Uterus (tissue), 4 donors: ENCODE measurements at regions of chr3 and their contacts with region 1.

Region 1: DNA sequence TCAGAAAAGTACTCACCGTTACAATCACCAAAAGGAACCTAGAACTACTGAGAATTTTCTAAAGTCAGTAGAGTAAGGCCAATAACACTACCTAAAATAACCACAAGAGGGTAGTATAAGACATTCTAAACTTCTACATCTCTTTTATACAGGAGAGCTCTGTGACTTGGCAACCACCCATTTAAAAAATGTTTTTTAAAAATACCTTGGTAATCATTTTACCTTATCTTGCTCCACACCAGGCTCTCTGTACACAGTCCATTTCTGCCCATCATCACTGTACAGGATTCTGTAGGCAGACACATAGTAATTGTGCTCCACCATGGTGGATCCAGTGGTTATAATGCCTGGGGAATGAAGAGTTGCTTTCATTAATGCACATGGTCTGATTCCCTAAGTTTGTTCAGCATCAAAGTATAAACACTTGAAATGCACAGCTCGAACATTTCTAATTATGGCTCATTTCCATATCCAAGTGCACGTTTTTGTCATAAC is 54.5 kb downstream of the ST3GAL6 start:
- DNase-seq: no peak
- H3K4me3 ChIP-seq: no peak overlapping the region
- H3K27ac ChIP-seq: no peak overlapping the region
- H3K4me1 ChIP-seq: no peaks in the 10 kb centered on the region
- H3K27me3 ChIP-seq: no peaks in the 10 kb centered on the region
- CTCF ChIP-seq: peak; percentile 61 to 79 (median 74)
- POLR2A ChIP-seq: no peak

Region 2: GRCh38 chr3:98602078-98602678 is 215.4 kb before region 1 on chr3:
- intact Hi-C with region 1: loop called (anchors 10 kb)
- DNase-seq: peak in 1 of 2 donors; percentile 27
- H3K4me3 ChIP-seq: no peak overlapping the region
- H3K27ac ChIP-seq: no peak overlapping the region
- H3K4me1 ChIP-seq: no peaks in the 10 kb centered on the region
- H3K27me3 ChIP-seq: no peaks in the 10 kb centered on the region
- CTCF ChIP-seq: peak; percentile 58 to 72 (median 60)
- POLR2A ChIP-seq: no peak

Region 3: DNA sequence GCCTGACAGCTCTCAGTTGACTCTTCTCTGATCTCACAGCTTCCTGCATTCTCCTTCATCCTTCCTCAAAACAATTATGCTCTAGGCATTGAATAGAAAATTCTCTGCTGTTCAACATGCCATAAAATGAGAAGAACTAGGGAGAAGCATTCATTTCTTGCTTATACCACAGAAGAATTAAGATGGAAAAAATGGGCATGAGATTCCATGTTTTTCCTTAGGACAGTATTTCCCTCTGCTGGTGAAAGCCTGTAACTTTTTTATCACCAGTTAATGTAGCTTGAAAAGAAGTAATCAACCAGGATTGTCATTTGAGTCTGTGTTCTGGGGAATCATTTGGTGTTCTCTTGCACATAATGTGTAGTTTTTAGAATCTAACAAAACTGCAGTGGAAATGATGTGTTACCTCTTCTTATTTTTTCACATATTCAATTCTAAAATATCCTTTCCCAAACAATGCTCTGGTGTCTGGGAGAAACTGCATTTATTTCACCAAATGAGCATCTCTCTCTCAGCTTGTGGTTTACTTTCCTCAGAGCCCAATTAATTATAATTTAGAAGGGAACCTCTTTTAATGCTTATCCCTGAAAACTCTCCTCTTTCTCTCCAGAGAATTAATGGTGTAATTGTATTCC is 176.7 kb after region 1 on chr3:
- intact Hi-C with region 1: loop called (anchors 10 kb)
- DNase-seq: no peak
- H3K4me3 ChIP-seq: no peak overlapping the region
- H3K27ac ChIP-seq: no peak overlapping the region
- H3K4me1 ChIP-seq: no peaks in the 10 kb centered on the region
- H3K27me3 ChIP-seq: no peaks in the 10 kb centered on the region
- CTCF ChIP-seq: peak; percentile 58 to 74 (median 70)
- POLR2A ChIP-seq: no peak